Head of caudate nucleus (tissue), 42 donors: ENCODE measurements at regions of chr10 and their contacts with region 1.

Region 1: DNA sequence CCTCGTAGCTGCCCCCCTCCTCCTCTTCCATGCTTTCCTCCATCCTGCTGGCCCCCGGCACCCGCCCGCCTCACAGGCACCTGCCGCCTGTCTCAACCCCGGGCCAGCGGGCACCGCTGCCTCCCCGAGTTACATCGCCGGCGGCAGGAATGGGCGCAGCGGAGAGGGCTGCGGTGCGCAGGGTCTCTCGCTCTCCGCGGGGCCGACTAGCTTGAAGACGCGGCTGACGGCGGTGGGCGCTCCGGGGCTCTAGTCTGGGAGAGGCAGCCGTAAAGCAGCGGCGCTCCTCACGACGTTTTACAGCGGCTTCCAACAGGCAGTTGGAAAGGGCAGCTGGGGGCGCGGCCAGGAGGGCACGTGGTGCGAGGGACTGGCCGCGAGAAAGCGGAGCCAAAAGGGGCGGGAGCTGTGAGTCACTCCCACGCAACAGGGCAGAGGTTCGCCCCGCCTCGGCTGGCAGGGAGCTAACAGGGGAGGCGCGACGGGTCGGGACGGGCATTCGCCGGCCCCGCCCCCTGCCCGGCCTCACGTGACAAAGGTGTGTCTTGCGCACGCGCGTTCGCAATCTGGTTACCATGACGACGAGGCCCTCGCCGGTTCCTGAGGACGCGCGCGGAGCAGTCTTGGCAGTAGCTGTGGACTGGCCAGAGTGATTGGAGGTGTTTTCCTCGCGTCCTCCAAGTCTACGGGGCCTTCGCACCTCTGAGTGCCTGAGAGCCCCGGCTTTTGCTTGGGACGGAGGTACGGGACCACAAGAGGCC is at the start of gene CACUL1:
- DNase-seq: peak; percentile 99 to 100 (median 100)

Region 2: DNA sequence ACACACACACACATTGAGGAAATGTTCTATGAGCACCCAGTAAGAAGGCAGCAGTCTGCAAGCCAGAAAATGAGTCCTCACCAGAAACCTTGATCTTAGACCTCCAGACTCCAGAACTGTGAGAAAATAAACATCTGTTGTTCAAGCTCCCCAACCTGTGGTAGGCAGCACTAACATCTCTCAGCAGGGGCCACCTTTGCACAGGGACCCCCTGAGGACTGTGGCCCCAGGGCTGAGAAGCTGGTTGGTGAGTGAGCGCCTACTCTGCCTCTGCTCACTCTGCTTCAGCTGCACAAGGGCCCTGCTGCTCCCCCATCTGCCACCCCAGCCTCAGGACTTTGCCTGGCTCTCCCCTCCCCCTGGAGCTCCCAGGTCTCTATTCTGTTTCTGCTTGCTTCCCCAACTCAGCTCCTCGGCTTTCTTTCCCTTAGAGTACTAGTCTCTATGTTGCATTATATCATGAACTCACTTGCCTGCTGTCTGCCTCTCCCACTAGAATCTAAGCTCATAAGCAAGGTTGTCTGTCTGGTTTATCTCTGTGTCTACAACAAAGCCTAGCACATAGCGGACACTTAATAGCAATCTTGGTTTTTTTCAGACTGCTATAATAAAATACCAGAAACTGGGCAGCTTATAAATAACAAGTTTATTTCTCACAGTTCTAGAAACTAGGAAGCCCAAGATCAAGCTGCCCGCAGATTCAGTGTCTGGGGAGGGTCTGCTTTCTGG is 119.1 kb before region 1 on chr10:
- intact Hi-C with region 1: no loop called
- DNase-seq: no peak

Region 3: DNA sequence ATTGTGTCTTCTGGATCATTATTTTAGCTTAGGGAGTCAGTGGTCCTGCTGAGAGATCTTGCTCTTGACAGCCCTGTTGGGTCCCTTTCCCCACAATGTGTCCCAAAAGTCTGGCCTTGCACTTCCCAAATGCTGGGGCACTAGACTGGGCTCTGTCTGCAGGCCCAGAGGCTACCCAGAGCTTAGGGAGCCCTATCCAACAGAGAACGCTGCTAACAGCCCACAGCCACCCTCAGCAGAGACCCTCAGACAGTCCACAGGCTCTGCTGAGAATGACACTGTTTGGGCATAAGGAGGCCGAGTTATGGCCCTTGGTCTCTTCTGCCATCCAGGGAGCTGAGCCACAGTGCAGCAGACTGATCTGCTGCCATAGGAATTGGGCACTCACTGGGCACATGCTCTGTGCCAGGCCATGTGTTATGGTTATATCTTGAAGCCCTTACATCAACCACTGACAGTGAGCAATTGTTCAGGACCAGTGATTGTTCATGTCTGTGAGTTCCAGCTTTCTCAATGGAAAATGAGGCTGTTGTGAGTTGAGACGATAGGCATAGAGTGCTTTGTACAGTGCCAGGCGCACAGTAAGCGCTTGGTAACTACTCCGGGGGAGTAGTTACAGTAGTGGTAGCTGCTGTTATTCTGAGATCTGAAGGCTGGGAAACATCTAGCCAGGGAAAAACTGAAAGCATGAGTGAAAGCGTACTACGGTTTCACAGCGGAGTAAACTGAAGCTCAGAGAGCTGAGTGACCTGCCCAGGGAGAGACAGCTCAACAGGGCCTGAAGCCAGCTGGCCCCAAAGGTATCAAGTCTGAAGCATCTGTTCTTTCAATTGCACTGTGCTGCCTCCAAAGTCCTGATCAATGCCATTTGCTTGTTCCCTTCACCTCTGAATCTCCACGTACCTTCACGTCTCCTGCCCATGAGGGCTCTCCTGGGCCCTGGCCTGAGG is 81.9 kb before region 1 on chr10:
- intact Hi-C with region 1: loop called (anchors 10 kb)
- DNase-seq: peak in 37 of 42 donors; percentile 16 to 86 (median 57)

Region 4: GRCh38 chr10:118687472-118687871 is 67.4 kb before region 1 on chr10:
- intact Hi-C with region 1: no loop called
- DNase-seq: no peak